Left ventricle myocardium inferior (tissue), 1 donor: ENCODE measurements at regions of chr1 and their contacts with region 1.

Region 1: GRCh38 chr1:175757381-175758015 is 14.1 kb upstream of the TNR start:
- DNase-seq: no peak
- H3K4me3 ChIP-seq: no peak overlapping the region
- H3K27ac ChIP-seq: no peak overlapping the region
- H3K4me1 ChIP-seq: no peaks in the 10 kb centered on the region
- H3K27me3 ChIP-seq: peaks cover 20% of the 10 kb centered on the region
- CTCF ChIP-seq: peak; percentile 77

Region 2: DNA sequence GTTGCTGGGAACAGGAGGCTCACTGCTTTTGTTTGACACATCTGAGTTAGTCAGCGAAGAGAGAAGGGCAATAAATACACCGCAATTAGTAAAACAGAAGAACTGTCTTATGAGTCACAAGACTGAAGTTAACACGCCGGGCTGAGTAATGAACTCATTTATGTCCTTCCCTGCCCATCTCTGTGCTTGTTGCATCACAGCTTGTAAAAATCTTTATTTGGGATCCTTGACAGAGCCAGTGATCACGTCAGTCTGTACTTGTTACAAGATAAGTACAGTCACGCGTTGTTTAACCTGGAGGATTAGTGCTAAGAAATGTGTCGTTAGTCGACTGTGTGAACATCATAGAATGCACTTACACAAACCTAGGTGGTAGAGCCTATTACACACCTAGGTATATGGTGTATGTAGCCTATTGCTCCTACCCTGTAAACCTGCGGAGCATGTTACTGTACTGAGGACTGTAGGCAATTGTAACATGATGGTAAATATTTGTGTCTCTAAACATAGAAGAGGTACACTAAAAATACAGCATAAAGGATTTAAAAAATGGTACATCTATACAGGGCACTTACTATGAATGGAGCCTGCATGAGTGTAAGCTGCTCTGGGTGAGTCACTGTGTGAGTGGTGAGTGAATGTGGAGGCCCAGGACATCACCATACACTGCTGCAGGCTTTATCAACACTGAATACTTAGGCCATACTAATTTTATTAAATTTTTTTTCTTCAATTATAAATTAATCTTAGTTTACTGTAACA is 286.3 kb before region 1 on chr1:
- intact Hi-C with region 1: loop called (anchors 10 kb)
- DNase-seq: no peak
- H3K4me3 ChIP-seq: no peak overlapping the region
- H3K27ac ChIP-seq: no peak overlapping the region
- H3K4me1 ChIP-seq: no peaks in the 10 kb centered on the region
- H3K27me3 ChIP-seq: peaks cover 38% of the 10 kb centered on the region
- CTCF ChIP-seq: no peak